ENCODE measurements at regions of chr11 and their contacts with region 1.

Region 1: GRCh38 chr11:35598254-35599125 is 19.8 kb upstream of the FJX1 start:
- DNase-seq: peak; percentile 78
- H3K4me3 Mint-ChIP-seq: no peak overlapping the region
- H3K27ac Mint-ChIP-seq: peak overlapping the region; percentile 68
- H3K4me1 Mint-ChIP-seq: peaks cover 17% of the 10 kb centered on the region
- H3K27me3 Mint-ChIP-seq: peaks cover 60% of the 10 kb centered on the region

Region 2: DNA sequence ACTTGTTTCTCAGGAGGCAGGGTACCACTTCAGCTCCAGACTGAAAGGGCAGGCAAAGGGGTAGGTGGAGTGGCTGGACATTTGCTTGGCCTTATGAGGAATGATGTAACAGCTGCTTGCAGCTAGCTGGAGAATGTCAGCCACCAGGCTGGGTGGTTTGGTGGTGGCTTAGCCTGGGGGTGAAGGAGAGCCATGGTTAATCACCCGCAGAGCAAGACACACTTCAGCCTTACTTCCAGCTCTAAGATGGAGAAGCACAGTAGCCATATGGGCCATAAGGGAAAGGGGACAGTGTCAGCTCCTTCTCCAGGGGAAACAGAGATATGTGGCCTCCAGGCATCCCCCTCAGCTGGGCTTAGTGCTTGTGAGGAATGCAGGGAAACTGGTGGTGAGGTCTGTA is 828.3 kb before region 1 on chr11:
- CTCF ChIA-PET with region 1: no interaction called
- intact Hi-C with region 1: no loop called
- DNase-seq: no peak
- H3K4me3 Mint-ChIP-seq: no peak overlapping the region
- H3K27ac Mint-ChIP-seq: no peak overlapping the region
- H3K4me1 Mint-ChIP-seq: no peaks in the 10 kb centered on the region
- H3K27me3 Mint-ChIP-seq: peaks cover 25% of the 10 kb centered on the region

Region 3: GRCh38 chr11:34916015-34916842 is 682.3 kb before region 1 on chr11 and contains the starts of genes APIP and PDHX:
- CTCF ChIA-PET with region 1: no interaction called
- intact Hi-C with region 1: loop called (anchors 2 kb)
- DNase-seq: peak; percentile 98
- H3K4me3 Mint-ChIP-seq: peak within 1 kb of the TSS; percentile 99
- H3K27ac Mint-ChIP-seq: peak within 1 kb of the TSS; percentile 96
- H3K4me1 Mint-ChIP-seq: peaks cover 44% of the 10 kb centered on the region
- H3K27me3 Mint-ChIP-seq: no peaks in the 10 kb centered on the region
- total RNA-seq, gene APIP: 42.4 to 42.5 TPM
- total RNA-seq, gene PDHX: 38.2 to 40.9 TPM

Region 4: GRCh38 chr11:35272391-35272902 is 326.0 kb before region 1 on chr11:
- CTCF ChIA-PET with region 1: no interaction called
- intact Hi-C with region 1: loop called (anchors 5 kb)
- DNase-seq: peak; percentile 70
- H3K4me3 Mint-ChIP-seq: peak overlapping the region; percentile 17
- H3K27ac Mint-ChIP-seq: peak overlapping the region; percentile 63
- H3K4me1 Mint-ChIP-seq: peaks cover 48% of the 10 kb centered on the region
- H3K27me3 Mint-ChIP-seq: no peaks in the 10 kb centered on the region

Region 5: GRCh38 chr11:35529971-35530495 is 68.5 kb before region 1 on chr11:
- CTCF ChIA-PET with region 1: no interaction called
- intact Hi-C with region 1: no loop called
- DNase-seq: no peak
- H3K4me3 Mint-ChIP-seq: no peak overlapping the region
- H3K27ac Mint-ChIP-seq: no peak overlapping the region
- H3K4me1 Mint-ChIP-seq: peaks cover 11% of the 10 kb centered on the region
- H3K27me3 Mint-ChIP-seq: peaks cover 32% of the 10 kb centered on the region

Region 6: GRCh38 chr11:35785287-35786167 is 187.0 kb after region 1 on chr11:
- CTCF ChIA-PET with region 1: no interaction called
- intact Hi-C with region 1: loop called (anchors 1 kb)
- DNase-seq: peak; percentile 10
- H3K4me3 Mint-ChIP-seq: no peak overlapping the region
- H3K27ac Mint-ChIP-seq: no peak overlapping the region
- H3K4me1 Mint-ChIP-seq: peaks cover 48% of the 10 kb centered on the region
- H3K27me3 Mint-ChIP-seq: no peaks in the 10 kb centered on the region